CD14-positive monocyte (primary cell): ENCODE measurements at regions of chr14 and their contacts with region 1.

Region 1: DNA sequence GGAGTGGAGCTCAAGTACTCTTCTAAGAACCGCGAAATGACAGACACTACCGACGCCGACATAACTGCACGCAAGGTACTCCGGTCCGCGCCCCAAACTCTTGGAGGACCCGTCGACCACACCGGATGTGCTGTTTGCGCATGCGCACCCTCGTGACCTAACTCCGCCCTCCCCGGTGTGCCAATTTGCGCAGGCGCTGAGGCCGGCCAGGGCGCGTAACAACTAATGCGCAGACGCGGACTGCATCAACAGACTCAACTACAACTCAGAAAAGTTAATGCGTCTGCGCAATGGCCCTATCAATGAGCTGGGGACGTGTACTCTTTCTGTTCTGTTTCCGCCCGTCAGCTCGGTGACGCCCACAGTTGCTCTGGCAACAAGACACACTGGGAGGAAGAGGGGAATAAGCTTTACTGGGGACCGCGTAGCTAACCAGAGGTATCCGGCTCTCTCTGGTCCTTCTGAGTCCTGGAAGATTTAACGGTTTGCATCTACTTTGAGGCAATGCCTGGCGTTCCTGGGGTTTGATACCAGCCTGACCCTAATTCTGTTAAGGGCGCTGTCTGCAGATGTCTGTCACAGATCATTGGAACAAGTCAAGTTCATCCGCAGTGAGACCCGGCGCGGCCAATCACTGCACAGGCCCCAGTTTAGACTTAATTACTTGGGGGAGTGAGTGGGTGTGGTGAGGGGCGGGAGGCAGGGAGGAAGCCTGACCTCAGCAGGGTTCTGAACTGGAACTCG is at the start of gene DAD1:
- DNase-seq: peak; percentile 99 to 100 (median 99)
- H3K4me3 ChIP-seq: peak within 1 kb of the TSS; percentile 77 to 95 (median 82)
- H3K4me3 Mint-ChIP-seq: peak within 1 kb of the TSS; percentile 95 to 98
- H3K27ac ChIP-seq: peak within 1 kb of the TSS; percentile 90 to 98
- H3K27ac Mint-ChIP-seq: peak within 1 kb of the TSS; percentile 96 to 100 (median 99)
- H3K4me1 ChIP-seq: peaks cover 20 to 25% of the 10 kb centered on the region in 2 donors
- H3K4me1 Mint-ChIP-seq: peaks cover 41% of the 10 kb centered on the region
- H3K27me3 ChIP-seq: no peaks in the 10 kb centered on the region
- H3K27me3 Mint-ChIP-seq: peaks cover 4 to 9% (median 7%) of the 10 kb centered on the region in 3 donors
- CTCF ChIP-seq: no peak
- polyA plus RNA-seq, gene DAD1: 126 to 444 (median 440) TPM

Region 2: DNA sequence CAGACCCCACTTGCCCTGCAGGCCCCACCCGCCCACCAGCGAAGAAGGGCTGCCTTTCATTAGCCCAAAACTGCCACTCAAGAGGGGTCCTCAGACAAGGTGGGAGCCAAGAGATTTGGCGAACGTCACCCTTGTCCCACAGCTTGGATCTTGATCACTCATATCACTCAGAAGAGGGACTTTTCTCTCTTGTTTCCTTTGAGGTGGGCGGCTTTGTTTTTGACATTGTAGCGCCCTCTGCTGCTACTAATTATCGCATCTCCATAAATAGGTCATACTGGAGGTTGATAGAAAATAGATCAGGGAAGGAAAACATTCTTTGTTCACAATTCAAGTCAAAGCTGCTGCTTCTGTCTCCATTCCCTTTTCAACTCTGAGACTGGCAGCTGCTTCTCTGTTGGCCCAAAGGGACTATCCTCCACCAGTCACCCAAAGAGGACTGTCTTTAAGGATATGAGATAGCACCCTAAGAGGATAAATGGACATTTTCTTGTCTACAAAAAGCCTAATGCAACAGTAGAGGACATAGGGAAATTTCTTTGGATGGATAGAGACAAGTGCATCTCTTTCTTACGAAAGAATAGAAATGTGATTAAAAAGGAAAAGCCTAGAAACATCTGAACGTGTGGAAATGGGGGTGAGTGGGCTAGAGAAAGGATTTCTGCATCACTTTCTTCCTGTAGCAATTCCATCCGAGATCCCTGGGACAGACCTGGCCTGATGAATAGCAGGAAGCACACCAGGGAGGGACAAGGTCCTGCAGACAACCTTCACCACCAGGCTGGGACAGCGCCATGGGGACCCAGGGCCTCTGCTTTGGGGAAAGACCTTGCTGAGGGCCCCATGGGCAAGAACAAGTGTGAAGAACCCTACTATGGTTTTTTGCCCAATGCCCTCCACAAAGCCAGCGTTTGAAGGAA is 116.1 kb before region 1 on chr14:
- intact Hi-C with region 1: no loop called
- DNase-seq: peak; percentile 27 to 46 (median 37)
- H3K4me3 ChIP-seq: no peak overlapping the region
- H3K4me3 Mint-ChIP-seq: no peak overlapping the region
- H3K27ac ChIP-seq: no peak overlapping the region
- H3K27ac Mint-ChIP-seq: no peak overlapping the region
- H3K4me1 ChIP-seq: no peaks in the 10 kb centered on the region
- H3K4me1 Mint-ChIP-seq: peaks cover 9% of the 10 kb centered on the region
- H3K27me3 ChIP-seq: no peaks in the 10 kb centered on the region
- H3K27me3 Mint-ChIP-seq: peaks cover 0 to 2% (median 2%) of the 10 kb centered on the region in 3 donors
- CTCF ChIP-seq: peak; percentile 77

Region 3: DNA sequence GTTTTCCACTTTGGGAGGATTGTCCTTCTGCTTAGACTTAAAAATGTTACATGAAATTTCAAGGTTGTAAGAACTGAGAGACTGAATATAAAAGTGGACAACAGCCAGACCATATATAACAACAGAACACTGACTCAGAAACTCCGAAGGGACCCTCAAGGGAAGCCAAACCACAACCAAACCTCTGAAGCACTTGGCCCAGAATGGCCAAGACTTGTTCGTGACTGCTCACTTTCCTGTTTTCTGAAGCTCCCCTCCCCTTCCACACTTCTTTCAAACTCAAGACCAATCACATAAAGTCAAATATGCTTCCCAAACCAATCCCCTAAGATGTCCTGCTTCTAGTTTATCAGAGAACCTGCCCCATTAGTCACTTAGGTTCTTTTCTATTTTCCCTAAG is 41.2 kb after region 1 on chr14:
- intact Hi-C with region 1: no loop called
- DNase-seq: no peak
- H3K4me3 ChIP-seq: no peak overlapping the region
- H3K4me3 Mint-ChIP-seq: no peak overlapping the region
- H3K27ac ChIP-seq: no peak overlapping the region
- H3K27ac Mint-ChIP-seq: no peak overlapping the region
- H3K4me1 ChIP-seq: no peaks in the 10 kb centered on the region
- H3K4me1 Mint-ChIP-seq: no peaks in the 10 kb centered on the region
- H3K27me3 ChIP-seq: no peaks in the 10 kb centered on the region
- H3K27me3 Mint-ChIP-seq: peaks cover 4 to 9% (median 8%) of the 10 kb centered on the region in 3 donors
- CTCF ChIP-seq: no peak

Region 4: GRCh38 chr14:23301288-23301968 is 712.2 kb after region 1 on chr14:
- intact Hi-C with region 1: loop called in 1 of 2 experiments (anchors 10 kb)
- DNase-seq: peak; percentile 98 to 99 (median 98)
- H3K4me3 ChIP-seq: peak overlapping the region; percentile 64 to 97 (median 90)
- H3K4me3 Mint-ChIP-seq: peak overlapping the region; percentile 87 to 96
- H3K27ac ChIP-seq: peak overlapping the region; percentile 93 to 96
- H3K27ac Mint-ChIP-seq: peak overlapping the region; percentile 97 to 99 (median 98)
- H3K4me1 ChIP-seq: peaks cover 32 to 50% of the 10 kb centered on the region in 2 donors
- H3K4me1 Mint-ChIP-seq: peaks cover 38% of the 10 kb centered on the region
- H3K27me3 ChIP-seq: no peaks in the 10 kb centered on the region
- H3K27me3 Mint-ChIP-seq: no peaks in the 10 kb centered on the region
- CTCF ChIP-seq: peak; percentile 68